ENCODE measurements at regions of chr12 and their contacts with region 1.

Region 1: GRCh38 chr12:92034858-92035401 is 110.7 kb downstream of the BTG1 start:
- DNase-seq: peak in 1 of 2 donors; percentile 65
- H3K4me3 ChIP-seq: peak overlapping the region; percentile 48 to 55
- H3K27ac ChIP-seq: no peak overlapping the region
- H3K4me1 ChIP-seq: peaks cover 0 to 19% of the 10 kb centered on the region in 2 donors
- H3K27me3 ChIP-seq: no peaks in the 10 kb centered on the region
- CTCF ChIP-seq: no peak

Region 2: GRCh38 chr12:91965781-91966180 is 69.1 kb before region 1 on chr12:
- intact Hi-C with region 1: loop called (anchors 5 kb)
- DNase-seq: no peak
- H3K4me3 ChIP-seq: no peak overlapping the region
- H3K27ac ChIP-seq: no peak overlapping the region
- H3K4me1 ChIP-seq: peaks cover 0 to 6% of the 10 kb centered on the region in 2 donors
- H3K27me3 ChIP-seq: no peaks in the 10 kb centered on the region
- CTCF ChIP-seq: no peak

Region 3: DNA sequence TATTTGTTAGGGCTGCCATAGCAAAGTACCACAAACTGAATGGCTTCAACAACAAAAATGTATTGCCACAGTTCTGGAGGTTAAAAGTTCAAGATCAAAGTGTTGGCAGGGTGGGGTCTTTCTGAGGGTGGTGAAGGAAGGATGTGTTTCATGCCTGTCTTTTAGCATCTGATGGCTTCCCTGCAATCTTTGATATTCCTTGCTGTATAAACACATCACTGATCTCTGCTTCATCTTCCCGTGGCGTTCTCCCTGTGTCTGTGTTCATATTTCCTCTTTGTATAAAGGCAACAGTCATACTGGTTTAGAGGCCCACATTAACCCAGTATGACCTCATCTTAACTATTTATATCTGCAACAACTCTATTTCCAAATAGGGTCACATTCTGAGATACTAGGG is 56.8 kb before region 1 on chr12:
- intact Hi-C with region 1: no loop called
- DNase-seq: no peak
- H3K4me3 ChIP-seq: no peak overlapping the region
- H3K27ac ChIP-seq: no peak overlapping the region
- H3K4me1 ChIP-seq: peaks cover 0 to 2% of the 10 kb centered on the region in 2 donors
- H3K27me3 ChIP-seq: no peaks in the 10 kb centered on the region
- CTCF ChIP-seq: no peak

Region 4: DNA sequence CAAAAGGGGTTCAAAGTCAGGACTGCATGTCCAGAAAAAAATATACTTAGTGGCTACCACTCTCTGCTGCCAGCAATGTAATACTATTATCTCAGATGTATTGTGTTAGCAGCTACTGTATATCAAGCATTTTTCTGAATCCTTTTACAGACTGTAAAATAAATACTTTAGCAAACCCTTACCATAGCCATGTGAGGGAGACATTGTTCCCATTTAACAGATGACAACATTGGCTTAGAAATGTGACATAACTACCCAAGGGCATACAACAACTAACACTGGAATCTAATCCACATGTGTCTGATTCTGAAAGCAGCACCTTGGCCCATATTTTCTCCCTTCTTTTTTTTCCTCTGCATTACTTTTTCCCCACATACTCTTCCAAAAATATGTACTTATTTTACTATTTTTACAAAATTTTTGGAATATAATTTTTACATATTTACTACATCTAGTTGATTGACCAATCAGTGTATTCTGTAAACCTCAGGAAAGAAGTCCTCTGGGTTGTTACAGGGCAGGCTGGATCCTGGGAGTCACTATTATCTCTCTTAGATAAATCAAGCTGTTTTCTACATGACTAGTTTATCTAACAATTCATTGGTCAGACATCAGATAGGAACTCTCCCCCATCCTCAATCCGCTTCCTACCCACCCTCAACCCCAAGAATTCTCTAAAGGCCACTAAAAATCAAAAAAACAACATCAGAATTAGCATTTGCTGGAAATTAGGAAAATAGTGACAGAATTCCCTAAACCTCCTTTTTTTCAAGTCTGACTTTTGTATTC is 43.3 kb before region 1 on chr12:
- intact Hi-C with region 1: loop called (anchors 5 kb)
- DNase-seq: no peak
- H3K4me3 ChIP-seq: no peak overlapping the region
- H3K27ac ChIP-seq: peak overlapping the region; percentile 53 to 76
- H3K4me1 ChIP-seq: peaks cover 0 to 14% of the 10 kb centered on the region in 2 donors
- H3K27me3 ChIP-seq: no peaks in the 10 kb centered on the region
- CTCF ChIP-seq: no peak